HEK293 (cell line): ENCODE measurements at regions of chr1 and their contacts with region 1.

Region 1: GRCh38 chr1:205631727-205632373 is at the start of gene ELK4:
- H3K4me3 ChIP-seq: peak within 1 kb of the TSS; percentile 83
- H3K27ac ChIP-seq: peak within 1 kb of the TSS; percentile 97
- H3K4me1 ChIP-seq: no peaks in the 10 kb centered on the region
- CTCF ChIP-seq: peak; percentile 95

Region 2: DNA sequence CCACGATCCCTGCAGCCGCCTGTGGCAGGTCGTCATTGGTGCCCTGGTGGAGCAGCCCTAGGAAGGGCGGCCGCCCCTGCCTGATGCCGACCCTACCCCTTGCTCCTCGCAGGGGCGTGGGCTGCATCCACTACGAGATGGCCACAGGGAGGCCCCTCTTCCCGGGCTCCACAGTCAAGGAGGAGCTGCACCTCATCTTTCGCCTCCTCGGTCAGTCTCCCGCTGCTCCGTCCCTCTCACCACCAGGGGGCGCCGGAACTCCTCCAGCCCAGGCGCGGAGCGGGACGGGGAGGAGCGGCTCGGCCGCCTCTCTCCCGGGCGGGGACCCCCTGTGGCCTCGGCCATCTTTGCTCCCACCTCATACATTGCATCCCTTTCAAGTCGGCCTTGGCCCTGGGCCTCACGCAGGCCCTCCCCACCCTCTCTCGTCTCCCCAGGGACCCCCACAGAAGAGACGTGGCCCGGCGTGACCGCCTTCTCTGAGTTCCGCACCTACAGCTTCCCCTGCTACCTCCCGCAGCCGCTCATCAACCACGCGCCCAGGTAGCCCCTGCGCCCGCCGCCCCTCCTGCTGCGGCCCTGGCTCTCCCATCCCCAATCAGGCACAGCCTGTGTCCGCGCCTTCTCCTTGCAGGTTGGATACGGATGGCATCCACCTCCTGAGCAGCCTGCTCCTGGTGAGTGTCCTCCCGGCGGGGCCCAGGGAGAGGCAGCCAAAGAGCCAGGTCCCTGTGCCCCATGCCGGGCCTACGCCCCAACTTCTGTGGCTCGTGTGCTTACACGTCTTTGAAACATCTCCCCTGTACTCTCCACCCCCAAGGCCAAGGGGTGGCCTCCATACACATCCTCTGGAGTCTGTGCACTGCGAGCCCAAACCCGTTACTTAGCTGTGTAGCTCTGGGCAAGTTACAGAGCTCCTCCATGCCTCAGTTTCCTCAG is 102.7 kb before region 1 on chr1:
- CTCF ChIA-PET with region 1: interaction called, 13 read pairs
- POLR2A ChIA-PET with region 1: interaction called, 4 read pairs
- H3K4me3 ChIP-seq: no peak overlapping the region
- H3K27ac ChIP-seq: no peak overlapping the region
- H3K4me1 ChIP-seq: no peaks in the 10 kb centered on the region
- CTCF ChIP-seq: peak; percentile 97

Region 3: DNA sequence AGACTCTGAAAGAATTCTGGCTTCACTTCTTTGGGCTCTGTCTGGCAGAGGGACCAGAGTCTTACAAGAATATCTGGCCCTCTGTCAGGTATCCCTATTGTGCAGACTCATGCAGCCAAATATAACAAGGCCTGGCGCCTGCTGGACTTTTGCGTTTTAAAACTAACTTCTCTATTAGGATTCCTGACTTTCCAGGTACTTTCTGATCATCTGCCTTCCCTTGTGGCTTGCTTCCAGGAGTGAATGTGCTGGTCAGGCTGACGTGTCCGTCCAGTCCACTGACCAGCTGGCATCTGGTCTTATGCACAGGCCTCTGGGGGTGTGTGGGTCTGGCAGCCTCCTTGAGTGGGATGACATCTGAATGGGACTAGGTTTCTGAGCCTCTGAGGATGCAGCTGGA is 152.1 kb after region 1 on chr1:
- CTCF ChIA-PET with region 1: no interaction called
- POLR2A ChIA-PET with region 1: no interaction called
- H3K4me3 ChIP-seq: no peak overlapping the region
- H3K27ac ChIP-seq: no peak overlapping the region
- H3K4me1 ChIP-seq: 0 out of 2 replicates have a peak, but pooled peaks cover 4% of the 10 kb centered on the region
- CTCF ChIP-seq: no peak